Aorta (tissue), 5 donors: ENCODE measurements at regions of chrX and their contacts with region 1.

Region 1: GRCh38 chrX:150982788-150983520 is at the start of gene HMGB3:
- DNase-seq: peak; percentile 89 to 93
- ATAC-seq: peak; percentile 80
- H3K4me3 ChIP-seq: peak within 1 kb of the TSS; percentile 47 to 74
- H3K27ac ChIP-seq: no peak within 1 kb of the TSS
- H3K4me1 ChIP-seq: no peaks in the 10 kb centered on the region
- H3K27me3 ChIP-seq: no peaks in the 10 kb centered on the region
- total RNA-seq, gene HMGB3: 3.6 to 3.8 TPM

Region 2: DNA sequence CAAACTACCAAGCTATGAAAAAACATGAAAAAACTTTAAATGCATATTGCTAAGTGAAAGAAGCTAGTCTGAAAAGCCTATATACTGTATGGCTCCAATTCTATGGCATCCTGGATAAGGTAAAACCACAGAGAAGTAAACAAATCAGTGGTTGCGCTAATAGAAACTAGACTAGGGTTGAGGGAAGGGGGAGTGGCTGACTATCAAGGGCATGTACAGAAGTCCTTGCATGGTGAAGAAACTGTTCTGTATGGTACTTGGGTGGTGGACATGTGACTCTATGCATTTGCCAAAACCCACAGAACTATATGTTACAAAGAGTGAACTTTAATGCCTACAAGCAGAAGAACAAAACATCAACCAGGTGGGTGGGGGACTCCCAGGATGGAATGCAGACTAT is 192.9 kb before region 1 on chrX:
- intact Hi-C with region 1: no loop called
- DNase-seq: no peak
- ATAC-seq: no peak
- H3K4me3 ChIP-seq: no peak overlapping the region
- H3K27ac ChIP-seq: no peak overlapping the region
- H3K4me1 ChIP-seq: no peaks in the 10 kb centered on the region
- H3K27me3 ChIP-seq: no peaks in the 10 kb centered on the region

Region 3: DNA sequence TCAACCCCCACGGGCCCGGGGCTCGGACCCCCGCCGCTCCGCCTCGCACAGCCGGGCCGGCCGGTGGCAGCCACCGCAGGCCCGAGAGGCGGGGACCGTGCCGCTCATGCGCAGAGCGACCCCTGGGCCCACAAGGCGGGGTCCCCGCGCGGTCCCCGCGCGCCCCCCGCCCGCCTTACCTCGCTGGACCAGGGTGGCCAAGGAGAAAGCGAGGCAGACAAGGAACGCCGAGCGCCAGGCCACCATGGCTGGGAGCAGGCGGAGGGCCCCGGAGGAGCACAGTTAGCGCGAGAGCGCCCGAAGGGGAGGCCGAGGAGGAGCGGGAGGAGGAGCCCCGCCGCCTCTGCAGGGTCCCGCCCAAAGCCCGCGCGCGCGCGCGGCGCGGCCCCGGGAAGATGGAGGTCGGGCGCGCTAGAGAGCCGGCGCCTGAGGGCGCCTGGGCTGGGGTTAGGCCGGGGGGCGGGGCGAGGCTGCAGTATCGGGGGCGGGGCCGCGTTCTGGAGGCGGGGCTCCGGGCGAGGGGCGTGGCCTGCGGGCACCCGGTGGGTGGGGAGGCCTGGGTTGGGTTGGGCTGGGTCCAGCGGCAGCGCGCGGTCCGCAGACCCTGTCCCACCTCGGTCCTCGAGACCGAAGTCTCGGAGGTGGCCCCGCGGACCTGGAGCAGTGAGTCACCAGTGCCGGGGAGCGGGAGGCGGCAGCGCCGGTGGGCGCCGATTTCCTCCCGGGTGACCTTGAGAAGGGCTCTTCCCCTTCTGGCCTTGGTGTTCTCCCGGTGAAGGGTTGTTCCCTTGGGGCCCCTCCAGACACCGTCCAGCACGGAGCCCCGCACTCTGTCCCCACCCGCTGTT is 84.4 kb before region 1 on chrX and contains the start of gene CD99L2:
- intact Hi-C with region 1: loop called in 1 of 2 experiments (anchors 2 kb)
- DNase-seq: peak; percentile 91 to 95
- ATAC-seq: peak; percentile 96
- H3K4me3 ChIP-seq: peak within 1 kb of the TSS; percentile 63 to 86
- H3K27ac ChIP-seq: peak within 1 kb of the TSS in 1 of 2 donors; percentile 12
- H3K4me1 ChIP-seq: no peaks in the 10 kb centered on the region
- H3K27me3 ChIP-seq: no peaks in the 10 kb centered on the region
- total RNA-seq, gene CD99L2: 52.1 to 56.2 TPM

Region 4: GRCh38 chrX:151030845-151031244 is 47.9 kb after region 1 on chrX:
- intact Hi-C with region 1: no loop called
- DNase-seq: no peak
- ATAC-seq: no peak
- H3K4me3 ChIP-seq: no peak overlapping the region
- H3K27ac ChIP-seq: no peak overlapping the region
- H3K4me1 ChIP-seq: no peaks in the 10 kb centered on the region
- H3K27me3 ChIP-seq: no peaks in the 10 kb centered on the region

Region 5: DNA sequence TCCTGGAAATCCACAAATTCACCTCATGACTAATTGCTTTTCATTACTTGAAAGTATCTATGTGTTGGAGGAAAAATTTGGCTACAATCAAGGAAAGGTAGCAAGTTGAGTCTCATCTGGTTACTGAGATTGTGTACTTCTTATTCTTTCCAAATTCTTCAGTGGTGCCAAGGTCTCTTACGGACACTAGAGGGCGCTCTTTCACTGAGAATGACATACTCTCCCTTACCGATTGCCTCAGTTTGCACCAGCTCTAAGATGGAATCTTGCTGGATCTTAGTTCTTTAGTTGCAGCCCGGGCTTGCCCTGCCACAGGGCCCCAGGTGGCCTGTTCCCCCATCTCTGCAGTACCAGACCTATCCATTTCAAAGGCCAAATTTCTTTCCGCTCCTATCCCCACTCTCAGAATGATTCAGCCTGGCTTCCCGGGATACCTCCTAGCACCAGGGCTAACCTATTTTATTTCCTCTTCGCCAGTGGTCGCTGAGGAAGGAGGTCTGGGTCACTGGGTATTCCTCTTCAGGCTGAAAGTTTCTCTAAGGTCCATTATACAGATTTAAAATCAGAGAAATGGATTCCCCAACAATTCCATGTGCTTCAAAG is 168.8 kb after region 1 on chrX:
- intact Hi-C with region 1: no loop called
- DNase-seq: no peak
- ATAC-seq: no peak
- H3K4me3 ChIP-seq: no peak overlapping the region
- H3K27ac ChIP-seq: no peak overlapping the region
- H3K4me1 ChIP-seq: no peaks in the 10 kb centered on the region
- H3K27me3 ChIP-seq: no peaks in the 10 kb centered on the region

Region 6: DNA sequence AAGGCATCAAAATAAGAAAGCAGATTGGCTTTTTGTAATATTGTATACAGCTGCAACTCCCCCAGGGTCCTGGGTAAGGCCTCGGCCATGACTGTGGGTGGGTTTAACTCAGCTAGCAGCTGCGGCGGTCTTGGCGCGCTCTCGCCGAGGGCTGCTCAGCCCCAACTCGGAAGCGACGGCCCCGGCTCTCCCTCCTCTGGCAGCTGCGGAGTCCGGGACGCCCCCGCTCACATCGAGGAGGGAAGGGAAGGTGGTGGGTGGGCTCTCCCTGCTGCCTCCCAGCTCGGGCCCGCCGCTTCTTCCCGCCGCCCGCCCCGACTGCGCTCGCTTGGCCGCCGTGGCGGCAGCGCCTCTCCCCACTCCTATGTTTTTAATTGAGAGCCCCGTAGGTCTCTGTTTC is 244.7 kb after region 1 on chrX:
- intact Hi-C with region 1: no loop called
- DNase-seq: no peak
- ATAC-seq: no peak
- H3K4me3 ChIP-seq: no peak overlapping the region
- H3K27ac ChIP-seq: no peak overlapping the region
- H3K4me1 ChIP-seq: no peaks in the 10 kb centered on the region
- H3K27me3 ChIP-seq: no peaks in the 10 kb centered on the region

Region 7: GRCh38 chrX:151396825-151397740 is 414.1 kb after region 1 on chrX and contains the start of gene VMA21:
- intact Hi-C with region 1: loop called in 1 of 2 experiments (anchors 10 kb)
- DNase-seq: peak; percentile 93 to 96
- ATAC-seq: peak; percentile 95
- H3K4me3 ChIP-seq: peak within 1 kb of the TSS; percentile 45 to 88
- H3K27ac ChIP-seq: peak within 1 kb of the TSS; percentile 47 to 97
- H3K4me1 ChIP-seq: no peaks in the 10 kb centered on the region
- H3K27me3 ChIP-seq: no peaks in the 10 kb centered on the region
- total RNA-seq, gene VMA21: 23.2 to 24.8 TPM